Stomach (tissue), 19 donors: ENCODE measurements at regions of chr9 and their contacts with region 1.

Region 1: DNA sequence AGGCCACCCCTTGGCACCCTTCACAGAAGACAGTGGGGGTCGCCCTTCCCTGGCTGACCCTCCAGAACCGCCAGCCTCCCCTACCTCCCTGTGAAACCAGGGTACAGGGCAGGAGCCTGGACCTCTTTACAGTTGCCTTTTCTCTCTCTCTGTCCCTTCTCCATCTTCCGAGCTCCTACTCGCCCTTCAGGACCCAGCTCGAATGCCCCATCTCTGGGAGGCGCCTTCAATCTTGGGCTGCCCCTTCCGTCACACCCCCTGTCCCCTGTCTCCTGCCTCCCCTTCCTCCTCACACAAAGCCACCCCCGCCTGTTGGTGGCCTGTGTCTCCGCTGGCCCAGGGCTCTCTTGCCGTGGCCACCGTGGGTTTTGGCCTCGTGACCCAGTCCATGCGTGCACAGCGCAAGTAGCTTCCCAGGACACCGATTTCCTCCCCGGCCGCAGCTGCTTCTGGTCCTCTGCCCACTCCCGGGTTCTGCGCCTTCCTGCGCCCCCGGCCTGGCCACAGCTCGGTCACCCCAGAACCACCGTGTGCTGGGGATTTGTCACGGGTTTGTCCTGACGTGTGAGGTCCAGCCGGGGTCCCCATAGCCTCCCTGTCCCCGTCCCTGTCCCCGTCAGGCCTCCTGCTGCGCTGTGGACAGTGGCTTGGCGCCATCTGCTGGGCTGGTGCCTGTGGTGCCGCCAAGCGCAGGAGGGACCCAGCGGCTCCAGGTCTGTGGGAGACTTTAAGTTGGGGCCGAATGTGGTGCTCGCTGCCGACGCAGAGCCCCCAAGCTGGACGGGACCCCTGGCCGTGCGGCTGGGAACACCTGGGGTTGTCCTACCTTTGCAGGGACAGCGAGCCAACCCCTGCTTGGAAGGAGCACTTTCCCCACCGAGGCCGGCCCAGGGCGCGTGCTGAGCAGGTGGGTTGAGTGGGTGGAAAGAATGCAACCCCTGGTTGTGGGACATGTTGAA is 4.0 kb upstream of the TMEM250 start:
- DNase-seq: peak; percentile 83 to 87
- H3K4me3 ChIP-seq: peak overlapping the region in 2 of 4 donors; percentile 17 to 23
- H3K27ac ChIP-seq: no peak overlapping the region
- H3K4me1 ChIP-seq: peaks cover 16 to 29% (median 26%) of the 10 kb centered on the region in 4 donors
- H3K27me3 ChIP-seq: peaks cover 0 to 39% (median 4%) of the 10 kb centered on the region in 3 donors
- CTCF ChIP-seq: peak in 5 of 7 experiments; percentile 90 to 98 (median 97)
- EP300 ChIP-seq: no peak
- POLR2A ChIP-seq: no peak

Region 2: GRCh38 chr9:135864447-135865049 is 258.2 kb before region 1 on chr9:
- intact Hi-C with region 1: loop called (anchors 5 kb)
- DNase-seq: peak; percentile 66 to 72
- H3K4me3 ChIP-seq: no peak overlapping the region
- H3K27ac ChIP-seq: no peak overlapping the region
- H3K4me1 ChIP-seq: peaks cover 0 to 10% (median 7%) of the 10 kb centered on the region in 4 donors
- H3K27me3 ChIP-seq: no peaks in the 10 kb centered on the region
- CTCF ChIP-seq: peak in 5 of 7 experiments; percentile 31 to 86 (median 77)
- EP300 ChIP-seq: no peak
- POLR2A ChIP-seq: no peak

Region 3: DNA sequence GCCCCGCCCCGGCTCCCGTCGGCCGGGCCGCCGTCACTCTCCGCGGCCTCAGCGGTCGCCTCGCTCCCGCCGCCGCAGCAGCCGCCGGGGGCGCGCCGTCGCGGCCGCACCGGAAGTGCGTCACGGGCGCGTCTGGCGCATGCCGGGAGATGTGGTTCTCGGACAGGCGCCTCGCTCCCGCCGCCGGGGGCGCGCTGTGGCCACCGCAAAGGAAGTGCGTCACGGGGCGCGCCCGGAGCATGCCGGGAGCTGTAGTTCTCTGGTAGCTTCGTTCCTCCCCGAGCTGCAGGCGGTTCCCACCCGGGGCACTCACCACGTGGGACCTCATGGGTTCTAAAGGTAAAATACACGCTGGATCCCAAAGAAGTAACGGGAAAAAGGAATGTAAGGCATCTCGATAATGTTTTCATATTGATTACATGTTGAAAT is 161.4 kb before region 1 on chr9 and contains the start of gene UBAC1:
- intact Hi-C with region 1: loop called (anchors 2 kb)
- DNase-seq: peak; percentile 97 to 98
- H3K4me3 ChIP-seq: peak within 1 kb of the TSS; percentile 87 to 97 (median 92)
- H3K27ac ChIP-seq: peak within 1 kb of the TSS; percentile 86 to 92 (median 88)
- H3K4me1 ChIP-seq: peaks cover 11 to 34% (median 26%) of the 10 kb centered on the region in 4 donors
- H3K27me3 ChIP-seq: peaks cover 0 to under 1% (median 0%) of the 10 kb centered on the region in 3 donors
- CTCF ChIP-seq: peak in 4 of 7 experiments; percentile 33 to 70 (median 50)
- EP300 ChIP-seq: no peak
- POLR2A ChIP-seq: no peak
- total RNA-seq, gene UBAC1: 22.6 to 70.1 (median 50.4) TPM

Region 4: DNA sequence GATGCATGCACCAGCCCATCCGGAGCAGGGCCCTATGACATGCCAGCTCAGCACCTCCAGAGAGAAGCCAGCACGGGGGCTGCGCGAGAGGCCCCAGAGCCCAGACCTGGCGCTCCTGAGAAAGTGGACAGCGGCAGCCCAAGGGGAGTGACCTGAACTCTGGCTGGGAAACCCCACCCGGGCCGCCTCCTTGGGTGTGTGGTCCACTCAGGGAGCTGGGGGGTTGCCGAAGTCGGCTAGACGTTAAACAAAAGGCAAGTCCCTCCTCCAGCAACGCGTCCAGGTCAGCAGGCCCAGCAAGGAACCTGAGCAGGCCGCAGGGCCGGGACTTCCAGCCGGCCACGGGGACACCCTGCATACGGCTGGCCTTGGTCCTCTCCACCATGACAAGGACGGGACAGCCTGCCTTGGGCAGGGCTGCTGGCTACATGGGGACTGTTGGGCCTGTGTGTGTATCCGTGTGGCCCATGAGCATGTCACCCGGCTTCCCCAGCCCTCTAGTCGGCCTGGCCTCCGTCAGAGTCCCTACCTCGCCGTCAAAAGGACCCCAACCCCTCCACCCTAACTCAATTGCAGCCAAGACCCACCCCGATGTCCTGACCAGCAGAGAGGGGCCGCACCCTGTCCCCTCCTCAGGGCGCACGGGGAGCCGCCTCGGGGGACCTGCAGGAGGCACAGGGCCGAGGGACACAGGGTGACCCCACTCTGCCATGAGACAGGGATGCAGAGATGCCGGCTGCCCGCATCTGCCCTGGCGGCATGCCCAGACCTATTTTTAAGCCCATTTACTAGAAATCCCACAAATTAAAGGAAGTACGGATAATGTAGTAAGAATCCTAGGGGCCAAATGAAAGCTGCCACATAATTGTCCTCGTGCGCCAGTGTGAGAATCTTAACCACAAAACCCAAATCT is 63.1 kb before region 1 on chr9:
- intact Hi-C with region 1: loop called (anchors 10 kb)
- DNase-seq: peak in 1 of 2 donors; percentile 7
- H3K4me3 ChIP-seq: no peak overlapping the region
- H3K27ac ChIP-seq: no peak overlapping the region
- H3K4me1 ChIP-seq: peaks cover 20 to 77% (median 60%) of the 10 kb centered on the region in 4 donors
- H3K27me3 ChIP-seq: no peaks in the 10 kb centered on the region
- CTCF ChIP-seq: no peak
- EP300 ChIP-seq: no peak
- POLR2A ChIP-seq: no peak